ENCODE measurements at regions of chr17 and their contacts with region 1.

Region 1: GRCh38 chr17:4625181-4625617 is 16.3 kb downstream of the ALOX15 start:
- DNase-seq: no peak
- H3K4me3 ChIP-seq: no peak overlapping the region
- H3K27ac ChIP-seq: no peak overlapping the region
- H3K4me1 ChIP-seq: no peaks in the 10 kb centered on the region
- H3K27me3 ChIP-seq: peaks cover 0 to 3% (median 0%) of the 10 kb centered on the region in 5 experiments

Region 2: DNA sequence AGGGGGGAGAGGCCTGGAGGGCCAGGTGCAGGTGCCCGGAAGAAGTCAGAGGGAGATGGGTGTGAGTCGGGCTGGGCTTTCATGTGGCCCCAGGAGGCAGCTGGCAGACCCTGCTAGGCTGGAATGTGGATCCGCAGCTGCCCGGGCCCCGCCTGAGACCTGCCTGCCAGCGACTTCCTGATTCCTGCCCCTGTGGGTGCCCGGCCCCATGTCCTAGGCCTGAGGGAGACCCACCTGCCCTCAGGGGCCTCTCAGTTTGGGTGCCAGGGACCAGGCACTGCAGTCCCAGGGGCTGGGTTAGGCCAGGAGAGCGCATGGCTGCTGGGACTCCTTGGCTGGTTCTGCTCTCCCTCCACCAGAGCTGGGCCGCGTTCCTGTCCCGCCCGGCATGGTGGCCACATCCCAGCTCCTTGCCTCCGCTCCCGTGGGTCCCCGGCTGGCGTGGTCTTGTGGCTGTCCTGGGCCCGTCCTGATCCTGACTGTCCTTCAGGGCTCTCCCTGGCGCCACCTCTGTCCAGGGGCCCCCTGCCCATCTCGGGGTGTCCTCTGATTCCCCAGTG is 148.6 kb before region 1 on chr17:
- CTCF ChIA-PET with region 1: no interaction called
- POLR2A ChIA-PET with region 1: no interaction called
- DNase-seq: no peak
- H3K4me3 ChIP-seq: no peak overlapping the region
- H3K27ac ChIP-seq: no peak overlapping the region
- H3K4me1 ChIP-seq: peaks cover 0 to 32% (median 24%) of the 10 kb centered on the region in 4 experiments
- H3K27me3 ChIP-seq: no peaks in the 10 kb centered on the region

Region 3: GRCh38 chr17:4541328-4542002 is 83.7 kb before region 1 on chr17:
- CTCF ChIA-PET with region 1: no interaction called
- POLR2A ChIA-PET with region 1: no interaction called
- DNase-seq: no peak
- H3K4me3 ChIP-seq: no peak overlapping the region
- H3K27ac ChIP-seq: no peak overlapping the region
- H3K4me1 ChIP-seq: peaks cover 0 to 42% (median 19%) of the 10 kb centered on the region in 4 experiments
- H3K27me3 ChIP-seq: no peaks in the 10 kb centered on the region

Region 4: DNA sequence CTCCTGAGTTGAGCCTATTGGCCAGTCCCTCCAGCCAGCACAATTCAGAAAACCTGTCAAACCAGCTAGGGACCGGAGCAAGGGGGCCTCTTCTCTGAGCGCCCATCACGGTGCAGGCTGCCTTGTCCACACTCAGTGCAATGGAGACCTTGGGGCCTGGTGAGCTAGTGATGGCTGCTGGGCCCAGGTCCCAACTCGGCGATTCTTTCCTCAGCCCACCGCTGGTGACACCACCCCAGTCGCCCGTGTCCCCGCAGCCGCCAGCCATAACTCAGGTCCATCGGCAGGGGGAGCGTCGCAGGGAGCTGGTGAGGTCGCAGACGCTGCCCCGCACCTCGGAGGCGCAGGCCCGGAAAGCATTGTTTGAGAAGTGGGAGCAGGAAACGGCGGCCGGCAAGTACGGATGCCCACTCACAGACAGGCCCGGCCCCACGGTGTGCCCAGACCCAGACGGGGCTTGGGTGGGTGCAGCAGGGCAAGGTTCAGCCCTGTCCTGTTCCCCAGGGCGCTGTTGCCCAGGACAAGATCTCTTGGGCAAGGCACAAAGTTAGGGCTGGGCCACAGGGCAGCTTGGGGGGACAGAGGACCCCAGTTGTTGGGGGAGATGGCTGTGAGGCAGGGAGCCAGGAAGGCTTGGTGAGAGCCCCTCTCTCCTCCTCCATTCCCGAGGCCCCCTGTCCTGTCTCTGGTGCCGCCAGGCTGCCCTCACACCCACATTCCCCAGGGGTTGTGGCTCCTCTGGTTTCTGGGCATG is 30.1 kb before region 1 on chr17:
- CTCF ChIA-PET with region 1: interaction called, 20 read pairs
- POLR2A ChIA-PET with region 1: no interaction called
- DNase-seq: peak; percentile 66 to 81 (median 79)
- H3K4me3 ChIP-seq: peak overlapping the region in 1 of 7 experiments; percentile 38
- H3K27ac ChIP-seq: no peak overlapping the region
- H3K4me1 ChIP-seq: peaks cover 0 to 7% (median 2%) of the 10 kb centered on the region in 4 experiments
- H3K27me3 ChIP-seq: peaks cover 0 to 4% (median 0%) of the 10 kb centered on the region in 5 experiments

Region 5: DNA sequence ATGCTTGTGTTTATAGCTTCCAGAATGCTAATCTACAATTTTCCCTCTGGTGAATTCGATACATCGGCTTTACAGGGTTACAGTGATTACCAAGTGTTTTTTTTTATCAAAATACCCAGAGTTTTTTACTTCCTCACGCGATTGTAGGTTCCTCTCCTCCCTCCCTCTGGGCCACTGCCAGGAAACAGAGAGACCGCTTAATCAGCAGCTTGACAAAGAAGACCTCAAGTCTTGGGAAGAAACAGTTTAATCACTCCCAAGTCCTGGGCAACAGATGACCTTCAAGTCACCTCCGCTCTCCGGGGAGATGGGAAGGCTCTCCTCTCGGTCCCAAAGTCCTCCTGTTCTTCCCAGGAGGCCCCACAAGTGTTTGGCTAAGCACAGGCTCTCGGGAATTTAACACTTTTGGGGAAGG is 17.4 kb before region 1 on chr17:
- CTCF ChIA-PET with region 1: interaction called, 16 read pairs
- POLR2A ChIA-PET with region 1: no interaction called
- DNase-seq: peak; percentile 90 to 93 (median 92)
- H3K4me3 ChIP-seq: peak overlapping the region in 2 of 7 experiments; percentile 8 to 13
- H3K27ac ChIP-seq: no peak overlapping the region
- H3K4me1 ChIP-seq: peaks cover 0 to 17% (median 15%) of the 10 kb centered on the region in 4 experiments
- H3K27me3 ChIP-seq: no peaks in the 10 kb centered on the region

Region 6: DNA sequence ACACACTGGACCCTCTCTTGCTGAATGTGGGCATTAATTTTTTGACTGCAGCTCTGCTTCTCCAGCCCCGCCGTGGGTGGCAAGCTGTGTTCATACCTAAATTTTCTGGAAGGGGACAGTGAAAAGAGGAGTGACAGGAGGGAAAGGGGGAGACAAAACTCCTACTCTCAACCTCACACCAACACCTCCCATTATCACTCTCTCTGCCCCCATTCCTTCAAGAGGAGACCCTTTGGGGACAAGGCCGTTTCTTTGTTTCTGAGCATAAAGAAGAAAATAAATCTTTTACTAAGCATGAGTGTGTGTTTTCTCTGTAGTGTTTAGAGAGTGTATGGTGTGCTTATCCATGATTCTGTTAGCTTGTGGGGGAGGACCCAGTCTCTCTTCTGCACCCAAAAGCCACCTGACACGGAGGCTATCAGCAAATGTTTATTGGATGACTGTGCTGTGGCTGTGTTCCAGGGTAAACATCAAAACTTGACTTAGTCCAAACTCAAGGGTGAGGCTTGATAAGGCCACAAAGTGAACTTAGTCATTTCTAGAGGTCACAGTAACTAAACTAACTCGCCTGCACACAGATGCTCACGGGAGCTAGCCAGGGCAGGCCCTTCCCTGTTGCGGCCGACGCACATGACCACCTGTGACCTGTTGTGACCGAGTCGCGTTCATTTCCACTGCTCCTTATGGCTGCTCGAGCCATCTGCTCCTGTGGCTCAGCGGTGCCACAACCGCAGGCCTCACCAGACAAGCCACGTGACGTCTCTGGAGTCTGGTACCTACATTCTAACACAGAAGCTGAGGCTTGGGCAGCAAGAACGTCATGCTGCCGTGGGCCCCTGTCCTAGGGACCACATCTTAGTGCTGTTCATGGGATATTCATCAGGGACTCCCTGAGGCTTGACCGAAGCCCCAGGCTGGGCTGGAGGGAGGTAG is 96.3 kb after region 1 on chr17:
- CTCF ChIA-PET with region 1: no interaction called
- POLR2A ChIA-PET with region 1: no interaction called
- DNase-seq: no peak
- H3K4me3 ChIP-seq: no peak overlapping the region
- H3K27ac ChIP-seq: no peak overlapping the region
- H3K4me1 ChIP-seq: peaks cover 0 to 20% (median 4%) of the 10 kb centered on the region in 4 experiments
- H3K27me3 ChIP-seq: no peaks in the 10 kb centered on the region